ENCODE measurements at regions of chr3 and their contacts with region 1.

Region 1: GRCh38 chr3:88282528-88283241 is 132.9 kb downstream of the C3orf38 start:
- H3K4me3 Mint-ChIP-seq: no peak overlapping the region
- H3K27ac Mint-ChIP-seq: no peak overlapping the region
- H3K4me1 Mint-ChIP-seq: no peaks in the 10 kb centered on the region
- H3K27me3 Mint-ChIP-seq: no peaks in the 10 kb centered on the region

Region 2: GRCh38 chr3:88149509-88150362 is 132.9 kb before region 1 on chr3 and contains the start of gene C3orf38:
- intact Hi-C with region 1: no loop called
- H3K4me3 Mint-ChIP-seq: peak within 1 kb of the TSS; percentile 95
- H3K27ac Mint-ChIP-seq: peak within 1 kb of the TSS; percentile 98
- H3K4me1 Mint-ChIP-seq: peaks cover 32% of the 10 kb centered on the region
- H3K27me3 Mint-ChIP-seq: no peaks in the 10 kb centered on the region

Region 3: DNA sequence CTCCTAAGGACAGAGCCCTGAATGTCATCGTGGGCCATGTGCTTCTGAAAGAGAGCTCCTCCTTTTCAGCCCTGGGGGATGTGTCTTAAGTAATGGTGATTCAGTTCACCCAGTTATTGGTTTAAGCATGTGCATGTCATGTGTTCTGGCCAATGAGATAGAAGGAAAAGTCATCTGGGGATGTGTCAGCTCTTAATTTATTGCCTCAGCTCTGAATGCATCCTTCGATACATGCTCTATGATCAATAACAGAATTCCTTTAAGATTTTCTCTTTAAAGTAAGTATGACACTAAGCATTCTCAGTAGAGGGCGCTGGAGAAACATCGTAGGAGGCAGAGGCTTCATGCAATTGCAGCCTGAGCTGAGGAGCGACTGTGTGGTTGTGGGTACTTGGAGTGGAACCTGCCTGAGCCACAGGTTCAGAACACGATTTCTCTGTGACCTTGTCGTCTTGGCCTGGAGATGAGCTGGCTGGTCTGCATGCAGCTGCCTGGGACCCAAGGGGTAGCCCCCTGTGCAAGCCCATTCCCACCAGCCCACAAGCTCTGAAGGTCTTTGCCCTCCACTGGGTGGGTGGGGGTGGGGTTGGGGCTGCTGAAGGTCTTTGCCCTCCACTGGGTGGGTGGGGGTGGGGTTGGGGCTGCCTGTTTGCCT is 63.4 kb before region 1 on chr3:
- intact Hi-C with region 1: no loop called
- H3K4me3 Mint-ChIP-seq: no peak overlapping the region
- H3K27ac Mint-ChIP-seq: no peak overlapping the region
- H3K4me1 Mint-ChIP-seq: no peaks in the 10 kb centered on the region
- H3K27me3 Mint-ChIP-seq: no peaks in the 10 kb centered on the region

Region 4: GRCh38 chr3:88248658-88249057 is 34.0 kb before region 1 on chr3:
- intact Hi-C with region 1: no loop called
- H3K4me3 Mint-ChIP-seq: no peak overlapping the region
- H3K27ac Mint-ChIP-seq: no peak overlapping the region
- H3K4me1 Mint-ChIP-seq: no peaks in the 10 kb centered on the region
- H3K27me3 Mint-ChIP-seq: no peaks in the 10 kb centered on the region

Region 5: DNA sequence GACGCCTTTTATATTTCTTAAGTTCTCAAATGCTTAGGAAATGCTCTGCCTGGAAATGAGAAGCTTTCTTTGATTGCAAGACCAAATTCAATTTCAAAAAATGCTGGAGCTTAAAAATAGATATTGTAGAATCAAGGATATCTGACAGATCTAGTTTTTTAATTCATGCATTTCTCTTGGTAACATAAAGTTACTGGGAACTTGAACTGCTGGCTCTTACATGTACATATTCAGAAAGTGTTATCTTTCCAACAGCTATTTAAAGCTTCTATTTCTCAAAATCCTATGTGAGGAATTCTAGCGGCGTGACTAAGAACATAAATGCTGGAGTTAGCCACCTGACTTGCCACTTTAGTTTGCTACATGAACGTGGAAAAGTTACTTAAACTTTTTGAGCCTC is 23.6 kb before region 1 on chr3:
- intact Hi-C with region 1: loop called (anchors 1 kb)
- H3K4me3 Mint-ChIP-seq: no peak overlapping the region
- H3K27ac Mint-ChIP-seq: no peak overlapping the region
- H3K4me1 Mint-ChIP-seq: no peaks in the 10 kb centered on the region
- H3K27me3 Mint-ChIP-seq: no peaks in the 10 kb centered on the region

Region 6: GRCh38 chr3:88444251-88444650 is 161.6 kb after region 1 on chr3:
- intact Hi-C with region 1: no loop called
- H3K4me3 Mint-ChIP-seq: no peak overlapping the region
- H3K27ac Mint-ChIP-seq: no peak overlapping the region
- H3K4me1 Mint-ChIP-seq: no peaks in the 10 kb centered on the region
- H3K27me3 Mint-ChIP-seq: no peaks in the 10 kb centered on the region

Measured in dendritic cell treated with granulocyte-macrophage colony-stimulating factor and Interleukin-4, amounts not matched to agents 40 ng/mL and 50 ng/mL, for 4 days (primary cell).